Ascending aorta (tissue), 2 donors: ENCODE measurements at regions of chr3 and their contacts with region 1.

Region 1: DNA sequence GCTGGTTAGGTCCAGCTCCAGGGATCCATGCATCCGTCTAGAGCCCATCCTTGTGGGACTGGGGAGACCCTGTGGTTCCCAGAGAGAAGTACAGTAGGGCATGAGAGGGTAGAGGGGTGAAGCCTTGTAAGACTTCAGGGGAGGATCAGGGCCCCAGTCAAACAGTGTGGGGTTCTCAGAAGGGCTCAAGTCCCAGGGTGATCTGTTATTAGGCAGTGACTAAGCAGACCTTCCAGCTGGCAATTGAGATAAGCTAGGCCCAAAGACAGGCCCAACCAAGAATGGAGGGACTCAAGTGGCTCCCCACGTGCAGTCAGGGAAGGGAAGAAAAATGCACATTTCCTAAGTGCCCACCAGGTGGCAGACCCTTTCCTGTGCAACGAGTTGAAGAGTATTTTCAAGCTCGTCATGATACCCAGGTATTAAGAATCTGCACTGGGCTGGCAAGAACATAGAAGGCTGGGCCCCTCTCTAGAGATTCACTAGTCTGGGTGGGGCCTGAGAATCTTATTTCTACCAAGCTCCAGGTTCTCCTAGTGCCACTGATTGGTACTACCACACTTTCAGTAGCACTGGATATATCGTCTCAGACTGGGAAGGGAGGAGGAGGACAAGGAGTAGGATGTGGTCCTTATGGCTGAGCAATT is 240.8 kb downstream of the NR1D2 start:
- DNase-seq: peak in 1 of 2 donors; percentile 69
- H3K4me3 ChIP-seq: no peak overlapping the region
- H3K27ac ChIP-seq: peak overlapping the region; percentile 66 to 87
- H3K4me1 ChIP-seq: peaks cover 0 to 36% of the 10 kb centered on the region in 2 donors
- H3K27me3 ChIP-seq: no peaks in the 10 kb centered on the region
- CTCF ChIP-seq: peak; percentile 54 to 65 (median 58)

Region 2: GRCh38 chr3:24042174-24043059 is 143.4 kb before region 1 on chr3:
- intact Hi-C with region 1: loop called (anchors 5 kb)
- DNase-seq: no peak
- H3K4me3 ChIP-seq: peak overlapping the region; percentile 5 to 47
- H3K27ac ChIP-seq: peak overlapping the region; percentile 91 to 94
- H3K4me1 ChIP-seq: peaks cover 8 to 51% of the 10 kb centered on the region in 2 donors
- H3K27me3 ChIP-seq: no peaks in the 10 kb centered on the region
- CTCF ChIP-seq: no peak

Region 3: GRCh38 chr3:24133436-24133835 is 52.4 kb before region 1 on chr3:
- intact Hi-C with region 1: loop called (anchors 5 kb)
- DNase-seq: no peak
- H3K4me3 ChIP-seq: no peak overlapping the region
- H3K27ac ChIP-seq: peak overlapping the region in 1 of 2 donors; percentile 75
- H3K4me1 ChIP-seq: peaks cover 0 to 25% of the 10 kb centered on the region in 2 donors
- H3K27me3 ChIP-seq: no peaks in the 10 kb centered on the region
- CTCF ChIP-seq: no peak

Region 4: DNA sequence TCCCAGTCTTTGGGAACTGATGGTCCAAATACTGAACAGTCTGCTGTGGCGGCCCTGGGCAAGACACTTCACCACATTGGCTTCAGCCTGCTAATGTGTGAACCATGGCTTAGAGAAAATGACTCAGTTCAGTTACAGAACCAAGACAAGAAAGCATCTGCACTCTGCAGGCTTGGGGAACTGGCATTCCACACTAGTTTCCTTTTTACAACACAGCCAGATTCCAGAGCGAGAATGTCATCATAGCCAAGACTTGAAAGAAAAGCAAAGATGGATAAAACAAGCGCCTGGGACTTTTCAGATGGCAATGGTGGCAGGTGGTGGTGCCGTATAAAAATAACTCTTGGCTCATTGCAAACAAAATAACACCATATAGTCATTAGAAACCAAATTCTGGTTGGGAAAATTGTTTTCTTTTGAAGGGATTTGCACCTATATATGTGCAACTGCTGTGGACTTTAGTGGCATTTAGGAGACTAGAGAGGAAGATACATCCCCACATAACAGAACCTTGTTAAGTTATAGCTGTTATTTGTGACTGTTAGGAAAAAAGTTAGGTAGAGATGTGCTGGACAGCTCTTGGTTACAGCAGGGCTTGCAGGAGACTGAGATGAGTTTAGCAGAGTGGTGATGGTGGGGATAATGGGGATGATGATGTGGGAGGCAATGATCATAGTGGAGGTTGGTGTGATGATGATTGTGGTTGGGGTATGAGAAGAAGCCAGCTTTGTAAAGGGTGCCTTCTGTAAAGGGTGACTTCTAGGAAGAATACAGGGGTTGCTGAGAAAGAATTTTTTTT is 35.2 kb after region 1 on chr3:
- intact Hi-C with region 1: loop called (anchors 5 kb)
- DNase-seq: peak; percentile 24 to 91
- H3K4me3 ChIP-seq: no peak overlapping the region
- H3K27ac ChIP-seq: peak overlapping the region; percentile 82 to 84
- H3K4me1 ChIP-seq: peaks cover 12 to 64% of the 10 kb centered on the region in 2 donors
- H3K27me3 ChIP-seq: no peaks in the 10 kb centered on the region
- CTCF ChIP-seq: no peak